ENCODE measurements at regions of chr16 and their contacts with region 1.

Region 1: DNA sequence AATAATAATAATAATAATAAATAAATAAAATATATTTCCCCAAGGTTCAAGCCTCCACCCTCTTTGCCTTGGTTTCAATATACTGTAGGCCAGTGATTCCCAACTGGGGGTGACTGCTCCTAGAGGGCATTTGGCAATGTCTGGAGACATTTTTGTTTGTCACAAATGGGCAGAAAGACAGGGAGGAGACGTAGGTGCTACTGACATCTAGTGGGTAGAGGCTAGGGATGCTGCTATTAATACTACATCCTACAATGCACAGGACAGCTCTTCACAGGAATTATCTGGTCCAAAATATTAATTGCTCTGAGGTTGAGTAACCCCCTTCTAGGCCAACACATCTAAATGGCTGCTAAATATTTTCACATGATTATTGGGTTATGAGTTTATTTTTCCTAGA is 12.8 kb upstream of the PRR14 start:
- DNase-seq: no peak
- ATAC-seq: no peak
- H3K4me3 ChIP-seq: no peak overlapping the region
- H3K27ac ChIP-seq: no peak overlapping the region
- H3K4me1 ChIP-seq: peaks cover 0 to 19% (median 9%) of the 10 kb centered on the region in 12 donors
- H3K27me3 ChIP-seq: no peaks in the 10 kb centered on the region
- CTCF ChIP-seq: peak in 5 of 12 donors; percentile 17 to 32 (median 28)
- POLR2A ChIP-seq: no peak

Region 2: DNA sequence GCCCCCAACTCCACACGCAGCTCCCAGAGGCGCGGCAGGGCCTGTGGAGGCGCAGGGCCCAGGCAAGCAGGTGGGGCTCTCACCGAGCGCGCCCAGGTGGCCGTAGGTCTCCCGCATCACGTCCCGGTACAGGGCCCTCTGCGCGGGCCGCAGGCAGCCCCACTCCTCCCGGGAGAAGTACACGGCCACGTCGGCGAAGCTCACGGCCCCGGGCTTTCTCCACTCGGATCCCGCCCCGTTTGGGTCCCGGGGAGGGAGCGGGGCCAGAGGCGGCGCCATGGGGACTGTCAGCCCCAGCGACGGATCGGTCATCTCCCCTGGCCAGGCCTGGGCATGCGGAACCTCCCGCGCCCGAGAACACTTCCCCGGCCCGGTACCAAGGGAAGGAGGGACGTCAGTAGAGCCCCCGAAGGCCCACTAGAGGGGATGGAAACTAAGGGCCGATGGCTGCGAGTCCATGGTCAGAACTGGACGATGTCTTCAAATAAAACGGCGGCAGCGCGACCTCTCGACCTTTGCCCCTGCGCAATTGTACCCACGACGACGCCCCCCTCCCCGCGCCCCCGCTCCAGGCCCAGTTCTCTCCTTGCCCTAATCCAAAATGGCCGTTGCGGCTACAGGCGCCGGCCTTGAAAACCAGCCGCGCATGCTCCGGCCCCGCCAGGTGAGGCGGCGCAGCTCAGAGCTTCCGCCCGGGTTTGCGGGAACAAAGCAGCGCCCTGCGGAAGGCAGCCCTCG is 103.4 kb before region 1 on chr16 and contains the start of gene ZNF747:
- intact Hi-C with region 1: loop called in 1 of 10 experiments (anchors 10 kb)
- DNase-seq: peak; percentile 95 to 96 (median 96)
- ATAC-seq: peak; percentile 88 to 95 (median 90)
- H3K4me3 ChIP-seq: peak within 1 kb of the TSS; percentile 31 to 94 (median 82)
- H3K27ac ChIP-seq: peak within 1 kb of the TSS; percentile 86 to 99 (median 94)
- H3K4me1 ChIP-seq: peaks cover 0 to 34% (median 21%) of the 10 kb centered on the region in 12 donors
- H3K27me3 ChIP-seq: no peaks in the 10 kb centered on the region
- CTCF ChIP-seq: peak in 2 of 12 donors; percentile 12 to 13
- POLR2A ChIP-seq: peak in 1 of 2 donors; percentile 63
- total RNA-seq, gene ZNF747: 8.6 to 15.2 (median 10.5) TPM

Region 3: GRCh38 chr16:30688675-30689074 is 50.7 kb after region 1 on chr16:
- intact Hi-C with region 1: no loop called
- DNase-seq: peak in 1 of 5 donors; percentile 10
- ATAC-seq: no peak
- H3K4me3 ChIP-seq: no peak overlapping the region
- H3K27ac ChIP-seq: no peak overlapping the region
- H3K4me1 ChIP-seq: peaks cover 0 to 8% (median 0%) of the 10 kb centered on the region in 12 donors
- H3K27me3 ChIP-seq: no peaks in the 10 kb centered on the region
- CTCF ChIP-seq: no peak
- POLR2A ChIP-seq: no peak

Measured in heart left ventricle (tissue), 16 donors.